WTC11 (cell line): ENCODE measurements at regions of chr22 and their contacts with region 1.

Region 1: DNA sequence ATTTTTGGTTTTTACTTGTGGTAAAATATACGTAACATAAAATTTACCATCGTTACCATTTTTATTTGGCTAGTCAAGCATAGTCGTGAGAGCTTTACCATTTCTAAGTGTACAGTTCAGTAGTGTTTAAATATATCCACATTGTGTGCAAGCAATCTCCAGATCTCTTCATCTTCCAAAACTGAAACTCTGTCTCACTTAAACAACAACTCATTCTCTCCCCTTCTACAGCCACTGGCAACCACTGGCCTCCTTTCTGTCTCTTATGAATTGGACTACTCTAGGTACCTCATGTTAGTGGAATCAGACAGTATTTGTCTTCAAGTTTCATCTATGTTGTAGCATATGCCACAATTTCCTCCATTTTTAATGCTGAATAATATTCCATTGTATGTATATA is 37.4 kb downstream of the SMC1B start:
- DNase-seq: no peak
- ATAC-seq: no peak
- H3K4me3 Mint-ChIP-seq: no peak overlapping the region
- H3K27ac Mint-ChIP-seq: no peak overlapping the region
- H3K4me1 Mint-ChIP-seq: no peaks in the 10 kb centered on the region; the same call in 1 of the 2 replicates
- H3K27me3 Mint-ChIP-seq: peaks cover 7% of the 10 kb centered on the region
- CTCF ChIP-seq: no peak

Region 2: GRCh38 chr22:44600207-44600785 is 775.7 kb before region 1 on chr22:
- CTCF ChIA-PET with region 1: no interaction called
- POLR2A ChIA-PET with region 1: interaction called, 12 read pairs
- DNase-seq: no peak
- ATAC-seq: no peak
- H3K4me3 Mint-ChIP-seq: no peak overlapping the region
- H3K27ac Mint-ChIP-seq: no peak overlapping the region
- H3K4me1 Mint-ChIP-seq: peaks cover 7% of the 10 kb centered on the region; the same call in 1 of the 2 replicates
- H3K27me3 Mint-ChIP-seq: peaks cover 2% of the 10 kb centered on the region; the same call in 1 of the 2 replicates
- CTCF ChIP-seq: no peak

Region 3: DNA sequence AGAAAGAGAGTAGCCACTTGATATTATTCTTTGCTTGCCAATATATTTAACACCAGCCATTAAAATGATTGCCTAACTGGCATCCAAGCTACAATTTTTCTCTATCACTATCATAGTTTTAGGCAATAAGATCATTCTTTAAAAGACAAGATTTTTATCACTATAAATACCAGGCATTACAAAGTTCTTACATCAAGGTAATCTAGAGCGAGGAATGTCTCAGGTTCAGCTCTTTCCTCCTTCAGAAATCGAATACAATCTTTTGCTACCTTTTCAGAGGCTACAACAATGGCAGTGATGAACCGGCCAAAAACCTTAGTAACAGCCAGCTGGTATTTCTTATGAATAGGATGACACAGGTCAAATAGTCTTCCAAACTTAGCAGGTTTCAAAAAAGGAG is 13.5 kb after region 1 on chr22:
- CTCF ChIA-PET with region 1: no interaction called
- POLR2A ChIA-PET with region 1: no interaction called
- DNase-seq: no peak
- ATAC-seq: no peak
- H3K4me3 Mint-ChIP-seq: no peak overlapping the region
- H3K27ac Mint-ChIP-seq: no peak overlapping the region
- H3K4me1 Mint-ChIP-seq: no peaks in the 10 kb centered on the region
- H3K27me3 Mint-ChIP-seq: peaks cover 2% of the 10 kb centered on the region; the same call in 1 of the 2 replicates
- CTCF ChIP-seq: no peak